Kidney (tissue), 22 donors: ENCODE measurements at regions of chr6 and their contacts with region 1.

Region 1: DNA sequence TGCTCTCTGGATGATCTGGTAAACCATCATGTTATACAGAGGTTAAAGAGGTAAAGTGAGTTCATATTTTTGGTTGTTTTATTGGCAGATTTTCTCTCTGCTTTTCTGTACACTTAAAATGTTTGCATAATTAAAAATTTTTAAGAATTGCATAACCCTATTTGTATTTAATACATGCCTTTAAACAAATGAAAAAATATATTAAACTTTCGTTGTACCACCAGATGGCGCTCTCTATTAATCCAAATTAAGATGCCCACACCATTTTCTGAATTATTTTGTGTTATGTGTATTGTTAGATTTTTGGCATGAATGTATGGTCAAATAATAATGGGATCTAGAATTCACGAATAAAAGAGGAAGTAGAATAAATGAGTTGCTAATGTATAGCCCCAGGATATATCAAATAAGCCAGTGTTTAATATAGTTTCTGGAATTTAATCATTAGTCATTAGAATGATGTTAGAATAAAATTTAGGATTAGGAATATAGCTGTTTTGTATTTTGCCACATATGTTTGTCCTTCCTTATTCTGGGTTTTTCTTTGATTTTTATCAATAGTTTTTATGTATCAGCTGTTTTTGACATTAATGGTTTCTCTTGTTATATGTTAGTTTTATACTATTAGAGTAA is 38.9 kb downstream of the SMAP1 start:
- DNase-seq: peak in 2 of 5 donors; percentile 48 to 62
- H3K4me3 ChIP-seq: no peak overlapping the region
- H3K27ac ChIP-seq: no peak overlapping the region
- H3K4me1 ChIP-seq: no peaks in the 10 kb centered on the region
- H3K27me3 ChIP-seq: no peaks in the 10 kb centered on the region
- CTCF ChIP-seq: peak; percentile 63

Region 2: GRCh38 chr6:70884074-70884983 is 177.7 kb after region 1 on chr6:
- intact Hi-C with region 1: loop called (anchors 10 kb)
- DNase-seq: peak; percentile 65 to 73 (median 66)
- H3K4me3 ChIP-seq: no peak overlapping the region
- H3K27ac ChIP-seq: no peak overlapping the region
- H3K4me1 ChIP-seq: no peaks in the 10 kb centered on the region
- H3K27me3 ChIP-seq: no peaks in the 10 kb centered on the region
- CTCF ChIP-seq: peak; percentile 96